ENCODE measurements at regions of chr22 and their contacts with region 1.

Region 1: GRCh38 chr22:39306581-39307361 is 12.7 kb downstream of the RPL3 start:
- DNase-seq: no peak
- H3K4me3 ChIP-seq: no peak overlapping the region
- H3K27ac ChIP-seq: no peak overlapping the region
- H3K27me3 ChIP-seq: no peaks in the 10 kb centered on the region
- CTCF ChIP-seq: peak; percentile 41

Region 2: GRCh38 chr22:39170825-39171622 is 135.7 kb before region 1 on chr22:
- CTCF ChIA-PET with region 1: interaction called, 59 read pairs
- POLR2A ChIA-PET with region 1: interaction called, 12 read pairs
- DNase-seq: peak; percentile 39
- H3K4me3 ChIP-seq: no peak overlapping the region
- H3K27ac ChIP-seq: no peak overlapping the region
- H3K27me3 ChIP-seq: peaks cover 7% of the 10 kb centered on the region
- CTCF ChIP-seq: peak; percentile 92

Region 3: DNA sequence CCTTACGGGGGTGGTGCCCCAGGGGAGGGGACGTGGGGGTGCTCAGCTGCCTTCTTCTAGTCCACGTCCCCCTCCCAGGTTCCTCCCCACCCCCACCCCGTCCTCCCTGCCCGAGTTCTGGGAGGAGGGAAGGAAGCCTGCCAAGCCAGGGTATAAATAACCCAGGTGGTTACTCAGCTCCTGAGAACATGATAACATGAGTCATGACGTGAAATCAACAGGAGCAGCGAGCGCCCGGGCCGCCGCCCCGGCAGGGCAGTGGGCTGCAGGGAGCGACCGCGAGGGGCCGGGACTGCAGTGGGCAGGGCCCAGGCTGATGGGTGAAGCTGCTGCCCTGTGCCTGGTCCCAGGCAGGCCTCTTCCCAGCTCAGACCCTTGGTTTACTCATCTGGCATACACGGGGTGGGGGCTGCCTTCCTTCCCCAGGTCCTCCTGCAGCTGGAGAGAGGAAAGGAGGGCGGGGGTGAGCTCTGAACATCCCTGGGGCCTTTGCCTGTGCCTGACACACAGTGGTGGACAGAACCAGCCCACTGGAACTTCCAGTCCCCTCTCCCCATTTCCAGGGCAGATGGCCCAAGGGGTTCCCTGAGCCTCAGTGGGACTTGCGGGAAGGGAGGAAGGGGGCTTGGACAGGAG is 53.2 kb before region 1 on chr22:
- CTCF ChIA-PET with region 1: no interaction called
- POLR2A ChIA-PET with region 1: interaction called, 12 read pairs
- DNase-seq: peak; percentile 54
- H3K4me3 ChIP-seq: no peak overlapping the region
- H3K27ac ChIP-seq: peak overlapping the region; percentile 61
- H3K27me3 ChIP-seq: no peaks in the 10 kb centered on the region
- CTCF ChIP-seq: no peak

Measured in AG04450 (cell line).